HepG2 (cell line): ENCODE measurements at regions of chr9 and their contacts with region 1.

Region 1: DNA sequence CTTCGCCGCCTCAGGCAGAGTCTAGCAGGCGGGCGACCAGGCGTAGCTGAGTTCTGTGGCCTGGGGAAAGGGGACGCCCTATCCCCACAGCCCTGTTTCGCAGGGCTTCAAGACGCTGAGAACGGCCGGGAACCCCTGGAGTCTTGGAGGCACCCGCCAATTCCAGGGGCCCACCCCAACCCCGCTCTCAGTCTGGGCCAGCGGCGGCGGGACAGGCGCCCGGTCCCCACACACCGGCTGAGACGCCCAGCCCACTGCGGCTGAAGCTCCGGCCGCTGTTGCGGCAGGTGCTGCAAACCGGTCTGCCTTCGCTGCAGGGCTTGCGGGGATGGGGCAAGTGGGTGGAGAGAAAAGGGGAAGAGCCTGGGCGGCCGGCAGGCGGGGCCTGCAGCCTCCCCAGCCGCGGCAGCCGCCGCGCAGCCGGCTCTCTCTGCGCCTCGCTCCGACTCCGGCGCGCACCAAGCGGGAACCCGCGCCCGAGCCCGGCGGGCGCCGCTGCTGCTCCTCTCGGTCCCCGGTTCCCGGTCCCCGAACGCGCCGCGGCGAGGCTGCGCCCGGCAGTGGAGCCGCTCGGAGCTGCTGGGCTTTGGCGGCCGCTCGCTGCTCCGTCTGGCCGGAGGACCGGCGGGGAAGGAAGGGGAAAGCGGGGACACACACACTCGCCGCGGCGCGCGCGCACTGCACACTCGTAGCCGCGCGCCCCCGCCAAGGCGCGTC is at the start of gene PIP5K1B:
- DNase-seq: peak; percentile 70
- ATAC-seq: peak; percentile 89
- H3K4me3 ChIP-seq: peak within 1 kb of the TSS; percentile 87 to 89 (median 88)
- H3K27ac ChIP-seq: peak within 1 kb of the TSS; percentile 83
- H3K4me1 ChIP-seq: peaks cover 62% of the 10 kb centered on the region
- H3K27me3 ChIP-seq: no peaks in the 10 kb centered on the region; a peak in 1 of 5 replicates
- CTCF ChIP-seq: peak; percentile 57
- EP300 ChIP-seq: no peak
- POLR2A ChIP-seq: peak; percentile 33 to 40; a peak in 2 of 4 replicates
- RAD21 ChIP-seq: peak; percentile 81
- total RNA-seq, gene PIP5K1B: 15.8 and 20.9 TPM in 2 replicates

Region 2: GRCh38 chr9:68731857-68732256 is 26.9 kb after region 1 on chr9:
- CTCF ChIA-PET with region 1: no interaction called
- POLR2A ChIA-PET with region 1: interaction called, 33 read pairs
- in situ Hi-C with region 1: no loop called
- intact Hi-C with region 1: no loop called
- DNase-seq: no peak
- ATAC-seq: peak; percentile 26
- H3K4me3 ChIP-seq: peak overlapping the region; percentile 17 to 45 (median 27); a peak in 4 of 6 replicates
- H3K27ac ChIP-seq: peak overlapping the region; percentile 70
- H3K4me1 ChIP-seq: peaks cover 77% of the 10 kb centered on the region
- H3K27me3 ChIP-seq: no peaks in the 10 kb centered on the region
- CTCF ChIP-seq: no peak
- EP300 ChIP-seq: no peak
- POLR2A ChIP-seq: no peak
- RAD21 ChIP-seq: no peak

Region 3: GRCh38 chr9:68779558-68780384 is 74.8 kb after region 1 on chr9:
- CTCF ChIA-PET with region 1: no interaction called
- POLR2A ChIA-PET with region 1: interaction called, 31 read pairs
- in situ Hi-C with region 1: loop called (anchors 5 kb)
- intact Hi-C with region 1: loop called (anchors 1 kb)
- DNase-seq: peak; percentile 89
- ATAC-seq: peak; percentile 93
- H3K4me3 ChIP-seq: peak overlapping the region; percentile 75 to 95 (median 78)
- H3K27ac ChIP-seq: peak overlapping the region; percentile 95
- H3K4me1 ChIP-seq: peaks cover 53% of the 10 kb centered on the region
- H3K27me3 ChIP-seq: no peaks in the 10 kb centered on the region; a peak in 1 of 5 replicates
- CTCF ChIP-seq: peak; percentile 92
- EP300 ChIP-seq: 0 out of 4 replicates have a peak, but pooled peaks of 1 of the 2 experiments have one; percentile 1
- POLR2A ChIP-seq: peak; percentile 80 to 82
- RAD21 ChIP-seq: peak; percentile 83

Region 4: DNA sequence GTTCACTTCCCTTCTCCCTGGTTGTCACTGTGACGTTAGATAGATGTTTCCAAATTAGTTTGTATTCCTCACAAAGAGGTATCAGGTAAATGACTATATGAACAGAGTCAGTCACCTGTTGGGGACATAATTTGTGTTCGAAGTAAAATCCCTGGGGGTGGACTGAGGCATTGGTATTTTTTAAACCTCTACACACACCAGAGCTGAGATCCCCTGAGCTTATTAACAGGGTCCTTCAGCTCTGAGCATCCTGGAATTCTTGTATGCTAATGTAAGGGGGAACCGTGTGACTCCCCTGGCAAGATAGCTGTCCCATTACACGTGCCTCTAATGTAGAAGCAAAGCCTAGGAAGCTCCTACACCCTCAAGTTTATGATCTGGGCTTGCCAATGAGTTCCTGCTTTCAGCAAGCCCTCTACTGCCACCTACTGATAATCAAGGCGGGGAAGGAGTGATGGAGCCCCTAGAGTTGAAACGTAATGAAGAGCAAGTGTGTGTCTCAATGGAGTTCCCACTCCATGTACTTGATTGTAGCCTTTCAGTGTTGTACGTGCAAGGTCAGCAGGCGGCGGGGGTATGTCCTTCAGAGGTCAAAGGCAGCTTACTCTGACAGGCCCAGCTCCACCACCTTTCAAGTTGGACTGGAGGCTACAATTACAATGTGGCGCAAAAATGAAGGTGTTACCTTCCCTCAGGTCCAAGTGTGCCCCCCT is 294.6 kb after region 1 on chr9:
- CTCF ChIA-PET with region 1: no interaction called
- POLR2A ChIA-PET with region 1: no interaction called
- in situ Hi-C with region 1: loop called (anchors 10 kb)
- intact Hi-C with region 1: no loop called
- DNase-seq: peak; percentile 75
- ATAC-seq: peak; percentile 98
- H3K4me3 ChIP-seq: no peak overlapping the region
- H3K27ac ChIP-seq: no peak overlapping the region
- H3K4me1 ChIP-seq: peaks cover 7% of the 10 kb centered on the region; the same call in 1 of the 2 replicates
- H3K27me3 ChIP-seq: no peaks in the 10 kb centered on the region
- CTCF ChIP-seq: peak; percentile 92
- EP300 ChIP-seq: no peak
- POLR2A ChIP-seq: no peak
- RAD21 ChIP-seq: peak; percentile 83